Right cardiac atrium (tissue), 5 donors: ENCODE measurements at regions of chr1 and their contacts with region 1.

Region 1: DNA sequence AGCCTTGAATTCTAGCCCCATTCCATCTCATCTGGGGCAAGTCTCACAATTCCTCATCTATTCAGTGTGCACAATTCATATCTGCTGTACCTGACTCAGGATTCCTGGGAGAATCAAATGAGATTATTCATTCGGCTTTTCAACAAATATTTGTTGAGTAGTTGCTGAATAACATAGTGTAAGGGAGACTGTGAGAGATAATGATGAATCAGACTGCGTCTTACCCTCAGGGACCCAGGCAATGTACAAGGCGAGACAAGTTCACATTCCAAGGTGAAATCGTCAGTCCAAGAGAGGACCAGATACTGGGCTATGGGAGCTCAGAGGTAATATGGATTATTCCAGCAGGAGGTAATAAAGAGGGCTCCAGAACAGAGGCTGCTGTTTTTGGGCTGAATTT is 67.8 kb upstream of the SMYD2 start:
- DNase-seq: no peak
- ATAC-seq: no peak
- H3K4me3 ChIP-seq: no peak overlapping the region
- H3K27ac ChIP-seq: no peak overlapping the region
- H3K4me1 ChIP-seq: no peaks in the 10 kb centered on the region
- H3K27me3 ChIP-seq: peaks cover 2% of the 10 kb centered on the region

Region 2: GRCh38 chr1:214337511-214337910 is 124.4 kb after region 1 on chr1:
- intact Hi-C with region 1: no loop called
- DNase-seq: no peak
- ATAC-seq: peak; percentile 38 to 75
- H3K4me3 ChIP-seq: no peak overlapping the region
- H3K27ac ChIP-seq: no peak overlapping the region
- H3K4me1 ChIP-seq: peaks cover 3% of the 10 kb centered on the region
- H3K27me3 ChIP-seq: no peaks in the 10 kb centered on the region

Region 3: GRCh38 chr1:214584805-214585766 is 371.9 kb after region 1 on chr1:
- intact Hi-C with region 1: loop called in 1 of 4 experiments (anchors 10 kb)
- DNase-seq: no peak
- ATAC-seq: peak; percentile 70 to 83
- H3K4me3 ChIP-seq: no peak overlapping the region
- H3K27ac ChIP-seq: no peak overlapping the region
- H3K4me1 ChIP-seq: peaks cover 1% of the 10 kb centered on the region
- H3K27me3 ChIP-seq: no peaks in the 10 kb centered on the region

Region 4: DNA sequence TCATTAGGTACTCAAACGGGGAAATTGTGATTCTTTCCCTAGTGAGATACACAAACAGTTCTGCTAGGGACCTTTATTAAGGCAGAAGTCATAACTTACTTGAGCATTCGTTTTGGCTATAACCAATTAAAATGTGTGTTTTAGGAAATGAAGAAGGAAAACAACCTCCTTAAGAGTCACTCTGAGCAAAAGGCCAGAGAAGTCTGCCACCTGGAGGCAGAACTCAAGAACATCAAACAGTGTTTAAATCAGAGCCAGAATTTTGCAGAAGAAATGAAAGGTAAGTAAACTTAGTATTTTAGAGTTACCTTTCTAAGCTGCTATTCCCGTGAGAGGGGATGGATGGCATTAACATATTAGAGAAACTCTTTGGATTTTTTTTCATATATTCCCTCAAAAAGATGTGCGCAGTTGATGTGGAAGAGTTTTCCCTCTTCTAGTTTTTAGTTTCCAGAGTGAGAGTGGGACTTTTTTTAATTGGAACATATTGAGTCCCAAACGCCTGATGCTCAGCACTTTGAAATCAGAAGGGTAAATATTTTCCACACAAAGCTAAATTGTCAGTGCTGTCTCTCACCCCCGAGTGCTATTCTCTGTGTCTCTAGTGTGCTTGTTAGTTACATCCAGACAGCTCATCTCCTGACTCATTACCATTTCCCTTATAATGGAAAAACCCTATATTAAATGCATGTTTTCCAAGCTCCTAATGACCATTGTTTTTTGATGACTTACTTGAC is 424.8 kb after region 1 on chr1:
- intact Hi-C with region 1: loop called in 1 of 4 experiments (anchors 5 kb)
- DNase-seq: no peak
- ATAC-seq: peak in 1 of 2 donors; percentile 21
- H3K4me3 ChIP-seq: no peak overlapping the region
- H3K27ac ChIP-seq: no peak overlapping the region
- H3K4me1 ChIP-seq: no peaks in the 10 kb centered on the region
- H3K27me3 ChIP-seq: no peaks in the 10 kb centered on the region